Activated naive CD4-positive, alpha-beta T cell treated with anti-CD3 and anti-CD28 coated beads for 36 hours (primary cell): ENCODE measurements at regions of chr19 and their contacts with region 1.

Region 1: GRCh38 chr19:14136509-14137281 is at the start of gene ASF1B:
- DNase-seq: peak; percentile 99
- H3K4me3 Mint-ChIP-seq: peak within 1 kb of the TSS; percentile 83
- H3K27ac Mint-ChIP-seq: peak within 1 kb of the TSS; percentile 91
- H3K4me1 Mint-ChIP-seq: peaks cover 41% of the 10 kb centered on the region
- H3K27me3 Mint-ChIP-seq: no peaks in the 10 kb centered on the region
- total RNA-seq, gene ASF1B: 54.7 to 56.6 TPM

Region 2: GRCh38 chr19:13880059-13881043 is 256.3 kb before region 1 on chr19:
- CTCF ChIA-PET with region 1: interaction called, 4 read pairs
- intact Hi-C with region 1: loop called (anchors 1 kb)
- DNase-seq: peak; percentile 99
- H3K4me3 Mint-ChIP-seq: peak overlapping the region; percentile 45
- H3K27ac Mint-ChIP-seq: peak overlapping the region; percentile 77
- H3K4me1 Mint-ChIP-seq: peaks cover 34% of the 10 kb centered on the region
- H3K27me3 Mint-ChIP-seq: no peaks in the 10 kb centered on the region

Region 3: DNA sequence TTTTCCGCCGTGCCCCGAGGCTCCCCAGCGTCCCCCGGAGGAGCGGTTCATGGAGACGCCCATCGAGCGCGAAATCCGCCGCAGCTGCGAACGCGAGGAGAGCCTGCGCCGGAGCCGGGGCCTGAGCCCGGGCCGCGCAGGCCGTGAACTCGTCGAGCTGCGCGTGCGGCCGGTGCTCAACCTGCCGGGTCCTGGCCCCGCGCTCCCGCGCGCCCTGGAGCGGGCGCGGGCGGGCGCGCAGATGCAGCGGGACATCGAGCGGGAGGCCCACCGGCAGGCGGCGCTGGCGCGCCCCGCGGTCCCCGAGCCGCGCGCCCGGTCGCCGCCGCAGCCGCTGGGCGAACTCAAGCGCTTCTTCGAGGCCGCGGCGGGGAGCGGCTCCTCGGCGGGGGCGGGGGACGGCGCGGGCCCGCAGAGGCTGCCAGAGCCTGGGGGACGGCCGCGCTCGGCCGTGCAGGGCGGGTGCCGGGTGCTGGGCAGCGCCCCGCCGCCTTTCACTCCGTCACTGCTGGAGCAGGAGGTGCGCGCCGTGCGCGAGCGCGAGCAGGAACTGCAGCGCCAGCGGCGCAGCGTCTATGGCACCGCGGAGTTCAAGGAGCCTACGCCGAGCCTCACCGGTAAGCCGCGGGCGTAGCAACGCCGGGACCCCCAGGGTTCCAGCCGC is 63.3 kb before region 1 on chr19:
- CTCF ChIA-PET with region 1: interaction called, 7 read pairs
- intact Hi-C with region 1: loop called (anchors 1 kb)
- DNase-seq: peak; percentile 75
- H3K4me3 Mint-ChIP-seq: peak overlapping the region; percentile 80
- H3K27ac Mint-ChIP-seq: no peak overlapping the region
- H3K4me1 Mint-ChIP-seq: peaks cover 10% of the 10 kb centered on the region
- H3K27me3 Mint-ChIP-seq: peaks cover 4% of the 10 kb centered on the region

Region 4: DNA sequence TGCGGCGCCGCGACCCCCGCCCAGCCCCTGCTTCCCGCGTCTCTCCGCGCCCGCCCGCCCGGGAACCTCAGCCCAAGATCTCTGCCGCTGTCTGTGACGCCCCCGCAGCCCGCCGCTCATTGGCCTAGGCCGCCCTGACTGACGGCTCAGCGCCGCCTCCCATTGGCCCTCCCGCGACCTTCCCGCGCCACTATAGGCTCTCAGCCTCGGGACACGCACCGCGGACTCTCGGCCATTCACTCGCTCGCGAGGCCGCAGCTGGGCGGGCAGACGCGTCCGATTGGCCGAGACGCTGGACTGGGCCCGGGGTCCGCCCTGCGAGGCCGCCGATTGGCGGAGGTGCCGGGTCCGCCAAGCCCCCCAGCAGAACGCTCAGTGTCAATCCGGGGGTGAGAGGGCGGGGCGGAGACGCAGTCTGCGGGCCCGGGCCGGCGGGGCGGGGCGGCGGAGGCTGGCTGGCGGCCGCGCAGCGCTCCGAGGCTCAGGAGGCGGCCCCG is 19.0 kb before region 1 on chr19 and contains the start of gene PRKACA:
- CTCF ChIA-PET with region 1: interaction called, 5 read pairs
- intact Hi-C with region 1: loop called (anchors 1 kb)
- DNase-seq: peak; percentile 99
- H3K4me3 Mint-ChIP-seq: peak within 1 kb of the TSS; percentile 86
- H3K27ac Mint-ChIP-seq: peak within 1 kb of the TSS; percentile 78
- H3K4me1 Mint-ChIP-seq: peaks cover 43% of the 10 kb centered on the region
- H3K27me3 Mint-ChIP-seq: no peaks in the 10 kb centered on the region
- total RNA-seq, gene PRKACA: 48.2 to 60.0 TPM

Region 5: DNA sequence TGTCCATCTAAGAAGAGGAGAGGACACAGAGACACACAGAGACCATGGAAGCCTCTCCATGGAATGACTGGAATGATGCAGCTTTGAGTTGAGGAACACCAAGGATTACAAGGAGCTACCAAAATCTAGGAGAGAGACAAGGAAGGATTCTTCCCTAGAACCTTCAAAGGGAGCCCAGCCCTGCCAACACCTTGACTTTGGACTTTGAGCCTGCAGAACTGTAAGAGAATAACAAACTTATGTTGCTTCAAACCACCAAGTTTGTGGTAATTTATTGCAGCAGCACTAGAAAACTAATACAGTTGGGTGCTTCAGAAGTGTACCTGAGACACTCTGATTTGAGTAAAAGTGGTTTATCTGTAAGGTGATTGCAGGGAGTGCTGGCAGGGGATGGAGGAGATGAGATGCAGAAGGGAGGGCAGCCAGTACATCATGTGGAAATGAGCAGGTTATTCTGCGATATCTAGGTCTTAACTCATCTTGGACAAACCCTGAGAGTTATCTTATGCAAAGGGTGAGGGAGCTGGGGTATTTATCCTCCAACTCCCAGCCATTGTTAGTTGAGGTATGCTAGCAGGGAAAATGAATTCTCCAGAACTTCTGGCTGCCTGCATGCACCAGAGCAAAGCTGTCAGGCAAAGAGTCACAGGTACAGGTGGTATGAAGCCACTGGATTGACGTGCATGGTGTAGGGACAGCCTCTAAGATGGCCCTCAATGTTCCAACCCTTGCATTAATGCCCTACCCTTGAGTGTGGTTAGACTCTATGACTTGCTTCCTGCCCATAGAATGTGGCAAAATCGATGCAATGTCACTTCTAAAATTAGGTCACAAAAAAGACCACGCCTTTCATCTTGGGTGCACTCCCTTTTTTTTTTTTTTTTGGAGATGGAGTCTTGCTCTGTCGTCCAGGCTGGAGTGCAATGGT is 100.6 kb after region 1 on chr19:
- CTCF ChIA-PET with region 1: no interaction called
- intact Hi-C with region 1: no loop called
- DNase-seq: no peak
- H3K4me3 Mint-ChIP-seq: no peak overlapping the region
- H3K27ac Mint-ChIP-seq: no peak overlapping the region
- H3K4me1 Mint-ChIP-seq: no peaks in the 10 kb centered on the region
- H3K27me3 Mint-ChIP-seq: no peaks in the 10 kb centered on the region

Region 6: DNA sequence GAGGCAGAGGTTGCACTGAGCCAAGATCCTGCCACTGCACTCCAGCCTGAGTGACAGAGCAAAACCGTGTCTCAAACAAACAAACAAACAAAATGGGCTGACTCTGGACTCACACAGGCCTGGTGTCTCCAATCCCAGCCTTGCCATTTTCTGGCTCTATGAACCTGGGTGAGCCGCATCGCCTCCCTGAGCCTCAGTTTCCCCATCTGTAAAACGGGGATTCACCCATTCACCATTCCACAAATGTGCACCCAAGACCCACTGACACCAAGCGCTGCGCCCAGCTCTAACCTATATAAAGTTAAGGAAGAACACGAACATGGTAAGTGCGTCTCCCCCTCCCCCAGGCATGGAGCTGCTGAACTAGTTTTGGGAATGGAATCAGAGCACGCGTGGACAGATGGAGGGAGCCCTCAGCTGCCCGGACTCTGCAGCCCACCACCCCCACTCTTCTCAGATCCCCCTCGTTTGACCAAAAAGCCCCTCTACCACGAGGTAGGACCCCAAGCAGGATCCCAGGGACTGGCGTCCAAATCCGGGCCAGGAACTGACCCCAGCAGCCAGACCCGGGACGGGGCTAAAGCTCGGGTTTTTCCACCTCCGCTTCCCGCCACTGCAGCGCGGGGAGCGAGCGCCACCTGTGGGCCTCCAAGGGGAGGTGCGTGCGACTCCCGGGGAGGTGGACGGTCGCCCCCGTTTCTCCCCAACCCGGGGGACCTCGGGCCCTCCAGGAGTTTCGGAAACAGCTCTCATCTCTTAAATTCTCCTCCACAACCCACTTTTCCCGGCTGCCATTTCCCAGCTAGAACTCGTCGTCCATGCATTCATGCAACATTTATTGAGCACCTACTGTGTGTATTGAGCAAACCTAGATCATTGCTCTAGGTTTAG is 211.5 kb after region 1 on chr19:
- CTCF ChIA-PET with region 1: interaction called, 17 read pairs
- intact Hi-C with region 1: loop called (anchors 2 kb)
- DNase-seq: peak; percentile 74
- H3K4me3 Mint-ChIP-seq: peak overlapping the region; percentile 43
- H3K27ac Mint-ChIP-seq: peak overlapping the region; percentile 79
- H3K4me1 Mint-ChIP-seq: peaks cover 20% of the 10 kb centered on the region
- H3K27me3 Mint-ChIP-seq: no peaks in the 10 kb centered on the region

Region 7: GRCh38 chr19:14419106-14419813 is 282.6 kb after region 1 on chr19 and contains the start of gene DDX39A:
- CTCF ChIA-PET with region 1: interaction called, 5 read pairs
- intact Hi-C with region 1: loop called (anchors 1 kb)
- DNase-seq: peak; percentile 99
- H3K4me3 Mint-ChIP-seq: peak within 1 kb of the TSS; percentile 100
- H3K27ac Mint-ChIP-seq: peak within 1 kb of the TSS; percentile 100
- H3K4me1 Mint-ChIP-seq: peaks cover 32% of the 10 kb centered on the region
- H3K27me3 Mint-ChIP-seq: no peaks in the 10 kb centered on the region
- total RNA-seq, gene DDX39A: 219 to 227 TPM

Region 8: DNA sequence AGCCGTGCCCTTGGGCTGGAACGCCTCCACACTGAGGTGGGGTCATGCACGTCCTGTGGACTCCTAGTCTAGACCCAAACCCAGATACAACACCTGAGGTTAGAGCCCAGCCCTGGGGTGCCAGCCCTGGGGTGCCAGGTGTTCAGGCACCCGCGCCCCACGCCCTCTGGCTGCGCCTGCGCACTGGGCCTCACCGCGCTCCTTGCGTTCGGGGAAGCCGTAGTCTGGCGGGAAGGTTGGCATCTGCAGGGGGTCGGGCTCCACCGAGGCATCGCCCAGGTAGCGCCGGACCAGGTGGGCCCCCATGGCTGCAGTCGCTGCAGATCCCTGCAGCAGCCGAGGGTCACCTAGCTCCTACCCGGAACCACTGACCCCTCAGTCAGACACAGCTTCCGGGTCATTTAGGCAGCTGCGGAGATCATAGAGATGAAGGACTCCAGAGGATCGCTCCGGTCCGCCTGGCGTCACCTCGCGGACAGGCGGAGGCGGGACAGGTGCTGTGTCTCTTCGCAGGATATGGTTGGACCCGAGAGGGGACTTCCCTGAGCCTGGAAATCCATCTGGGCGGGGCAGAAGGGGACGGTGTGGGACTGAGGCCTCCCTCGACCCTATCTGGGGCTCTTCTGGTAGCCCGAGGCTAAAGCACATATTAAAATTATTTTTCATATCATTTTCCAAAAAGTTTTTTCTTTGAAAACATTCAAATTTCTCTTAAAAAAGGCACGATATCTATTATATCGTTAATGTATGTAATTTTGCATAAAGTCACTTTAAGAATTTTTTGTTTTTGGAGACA is 435.2 kb after region 1 on chr19 and contains the start of gene NDUFB7:
- CTCF ChIA-PET with region 1: no interaction called
- intact Hi-C with region 1: loop called (anchors 1 kb)
- DNase-seq: peak; percentile 95
- H3K4me3 Mint-ChIP-seq: peak within 1 kb of the TSS; percentile 95
- H3K27ac Mint-ChIP-seq: peak within 1 kb of the TSS; percentile 79
- H3K4me1 Mint-ChIP-seq: peaks cover 38% of the 10 kb centered on the region
- H3K27me3 Mint-ChIP-seq: no peaks in the 10 kb centered on the region
- total RNA-seq, gene NDUFB7: 117 to 123 TPM